Esophagus muscularis mucosa (tissue), 4 donors: ENCODE measurements at regions of chr1 and their contacts with region 1.

Region 1: DNA sequence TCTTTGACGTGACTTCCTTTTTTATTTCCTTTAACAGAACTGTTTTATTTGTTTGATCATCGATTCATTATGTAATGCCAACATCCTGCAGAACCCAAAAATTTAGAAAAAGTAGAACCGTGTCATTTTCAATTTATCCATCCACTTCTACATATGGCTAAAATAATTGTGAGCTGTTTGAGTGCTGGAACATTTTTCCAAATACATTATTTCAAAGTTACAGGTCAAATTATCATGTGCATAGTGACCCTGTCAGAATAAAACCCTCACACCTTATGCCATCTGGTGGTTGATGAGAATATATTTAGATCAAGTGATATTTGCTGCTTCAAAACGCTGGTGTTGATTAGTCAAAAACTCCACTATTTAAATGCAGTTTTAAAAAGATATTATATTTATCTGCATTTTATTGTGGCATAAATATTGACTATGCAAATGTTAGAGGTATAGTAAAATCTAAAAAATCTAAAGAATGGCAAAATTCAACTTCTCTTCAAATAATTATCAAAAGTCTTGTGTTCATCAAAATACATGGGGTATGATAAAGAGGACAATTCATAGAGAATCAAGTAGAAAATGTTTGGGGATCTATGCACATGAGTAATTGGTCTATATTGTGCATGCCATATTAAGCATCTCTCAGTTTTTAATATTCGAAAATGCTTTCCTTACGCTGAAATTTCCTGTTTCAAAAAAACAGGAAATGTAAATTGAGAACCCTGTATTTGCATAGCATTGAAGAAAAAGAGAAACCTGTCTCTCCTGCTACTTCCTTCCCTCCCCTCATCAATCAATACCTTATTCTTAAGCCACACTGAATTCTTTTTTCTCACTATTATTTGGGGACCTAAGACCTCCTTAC is 39.7 kb downstream of the UBE2U start:
- DNase-seq: no peak
- H3K4me3 ChIP-seq: no peak overlapping the region
- H3K27ac ChIP-seq: no peak overlapping the region
- H3K4me1 ChIP-seq: peaks cover 3 to 10% (median 5%) of the 10 kb centered on the region in 4 donors
- H3K27me3 ChIP-seq: peaks cover 0 to 10% (median 0%) of the 10 kb centered on the region in 4 donors
- CTCF ChIP-seq: peak; percentile 31 to 37 (median 36)
- EP300 ChIP-seq: no peak
- POLR2A ChIP-seq: no peak

Region 2: GRCh38 chr1:63575340-63575826 is 667.7 kb before region 1 on chr1:
- intact Hi-C with region 1: loop called (anchors 5 kb)
- DNase-seq: no peak
- H3K4me3 ChIP-seq: no peak overlapping the region
- H3K27ac ChIP-seq: no peak overlapping the region
- H3K4me1 ChIP-seq: no peaks in the 10 kb centered on the region
- H3K27me3 ChIP-seq: no peaks in the 10 kb centered on the region
- CTCF ChIP-seq: peak; percentile 64 to 92 (median 76)
- EP300 ChIP-seq: no peak
- POLR2A ChIP-seq: no peak

Region 3: DNA sequence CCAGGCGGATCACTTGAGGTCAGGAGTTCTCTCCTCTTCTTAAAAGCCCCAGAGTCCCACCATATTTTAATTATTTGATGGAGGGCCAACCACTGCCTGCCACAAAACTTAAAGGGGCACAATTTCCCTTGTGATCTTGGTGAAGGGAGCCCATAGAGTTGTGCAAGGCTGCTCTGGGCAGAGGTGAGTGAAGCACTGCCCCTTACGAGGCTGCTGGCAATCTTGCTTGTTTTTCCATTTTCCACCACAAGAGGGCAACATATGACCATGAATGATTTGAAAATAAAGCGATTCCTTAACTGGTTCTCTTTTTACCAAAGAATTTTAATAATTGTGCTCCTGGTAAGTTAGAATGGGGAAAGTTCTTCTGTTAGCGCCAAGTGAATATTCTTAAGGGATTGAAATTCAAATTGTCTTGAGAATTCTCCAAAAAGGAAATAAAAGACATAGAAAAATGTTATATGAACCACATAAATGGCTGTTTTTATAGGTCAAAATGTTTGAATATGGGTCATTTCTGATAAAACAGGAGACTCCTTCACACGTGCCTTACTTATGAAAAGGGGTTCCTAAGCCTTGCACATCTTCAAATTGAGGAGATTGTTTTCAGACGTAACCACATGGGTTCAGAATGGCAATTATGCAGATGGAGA is 627.2 kb before region 1 on chr1:
- intact Hi-C with region 1: loop called (anchors 2 kb)
- DNase-seq: no peak
- H3K4me3 ChIP-seq: no peak overlapping the region
- H3K27ac ChIP-seq: no peak overlapping the region
- H3K4me1 ChIP-seq: peaks cover 4 to 15% (median 8%) of the 10 kb centered on the region in 4 donors
- H3K27me3 ChIP-seq: no peaks in the 10 kb centered on the region
- CTCF ChIP-seq: peak; percentile 78 to 84 (median 80)
- EP300 ChIP-seq: no peak
- POLR2A ChIP-seq: no peak

Region 4: DNA sequence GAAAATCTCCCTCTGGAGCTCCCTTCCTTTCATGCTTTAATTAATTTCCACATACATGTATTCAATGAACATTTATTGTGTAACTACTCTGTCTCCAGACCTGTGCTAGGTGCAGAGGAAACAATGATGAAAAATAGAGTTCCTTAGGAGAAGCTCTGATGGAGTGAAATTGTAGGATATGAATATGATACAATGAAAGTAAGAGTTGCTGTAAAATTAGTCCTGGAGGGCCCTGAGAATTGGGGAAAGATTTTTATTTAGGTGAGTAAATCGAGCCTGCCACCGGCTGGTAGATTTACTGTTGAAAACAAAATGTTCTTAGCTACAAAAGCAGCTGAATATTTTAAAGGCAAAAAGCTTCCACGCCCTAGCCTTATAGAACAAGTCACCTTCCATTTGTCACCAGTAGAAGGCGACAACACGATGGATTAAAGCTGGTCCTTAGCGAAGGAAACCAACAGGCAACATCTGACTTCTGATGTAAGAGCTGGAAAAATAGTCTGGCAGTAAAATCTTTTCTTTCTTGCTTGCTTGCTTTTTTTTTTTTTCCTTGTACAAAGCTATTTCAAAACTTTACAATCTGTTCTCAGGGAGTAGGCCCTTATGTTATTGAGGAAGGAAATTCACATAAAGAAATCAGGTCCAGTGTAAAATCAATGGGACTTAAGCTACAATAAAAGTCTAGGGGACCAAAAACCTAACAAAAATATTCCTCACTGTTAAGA is 551.3 kb before region 1 on chr1:
- intact Hi-C with region 1: loop called (anchors 5 kb)
- DNase-seq: no peak
- H3K4me3 ChIP-seq: no peak overlapping the region
- H3K27ac ChIP-seq: peak overlapping the region; percentile 19 to 44 (median 22)
- H3K4me1 ChIP-seq: peaks cover 5 to 21% (median 7%) of the 10 kb centered on the region in 4 donors
- H3K27me3 ChIP-seq: no peaks in the 10 kb centered on the region
- CTCF ChIP-seq: peak; percentile 69 to 73 (median 72)
- EP300 ChIP-seq: no peak
- POLR2A ChIP-seq: no peak

Region 5: DNA sequence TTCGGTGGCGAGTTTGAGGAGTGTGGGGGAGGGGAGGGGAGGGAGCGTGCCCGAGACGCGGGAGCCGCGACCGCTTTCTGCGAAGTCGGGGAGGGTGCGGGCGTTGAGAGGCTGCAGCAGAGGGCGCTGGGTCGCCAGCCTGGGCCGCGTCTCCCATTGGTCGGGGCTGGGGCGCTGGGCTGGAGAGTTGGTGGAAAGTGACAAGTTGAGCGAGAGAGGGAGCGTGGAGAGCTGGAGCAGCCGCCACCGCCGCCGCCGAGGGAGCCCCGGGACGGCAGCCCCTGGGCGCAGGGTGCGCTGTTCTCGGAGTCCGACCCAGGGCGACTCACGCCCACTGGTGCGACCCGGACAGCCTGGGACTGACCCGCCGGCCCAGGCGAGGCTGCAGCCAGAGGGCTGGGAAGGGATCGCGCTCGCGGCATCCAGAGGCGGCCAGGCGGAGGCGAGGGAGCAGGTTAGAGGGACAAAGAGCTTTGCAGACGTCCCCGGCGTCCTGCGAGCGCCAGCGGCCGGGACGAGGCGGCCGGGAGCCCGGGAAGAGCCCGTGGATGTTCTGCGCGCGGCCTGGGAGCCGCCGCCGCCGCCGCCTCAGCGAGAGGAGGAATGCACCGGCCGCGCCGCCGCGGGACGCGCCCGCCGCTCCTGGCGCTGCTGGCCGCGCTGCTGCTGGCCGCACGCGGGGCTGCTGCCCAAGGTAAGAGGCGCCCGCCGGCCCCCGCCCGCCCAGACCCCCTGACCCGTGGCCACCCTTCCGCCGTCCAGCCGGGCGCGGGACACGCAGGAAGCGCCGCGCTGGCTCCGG is 469.1 kb before region 1 on chr1 and contains the start of gene ROR1:
- intact Hi-C with region 1: loop called (anchors 10 kb)
- DNase-seq: peak; percentile 93
- H3K4me3 ChIP-seq: peak within 1 kb of the TSS; percentile 62 to 83 (median 70)
- H3K27ac ChIP-seq: peak within 1 kb of the TSS; percentile 76 to 87 (median 82)
- H3K4me1 ChIP-seq: peaks cover 6 to 31% (median 21%) of the 10 kb centered on the region in 4 donors
- H3K27me3 ChIP-seq: peaks cover 0 to 15% (median 0%) of the 10 kb centered on the region in 4 donors
- CTCF ChIP-seq: peak; percentile 47 to 64 (median 57)
- EP300 ChIP-seq: no peak
- POLR2A ChIP-seq: no peak
- total RNA-seq, gene ROR1: 5.1 to 7.3 (median 6.5) TPM